HCT116 (cell line): ENCODE measurements at regions of chr17 and their contacts with region 1.

Region 1: GRCh38 chr17:40063187-40063771 is 514 bp downstream of the THRA start:
- DNase-seq: no peak
- ATAC-seq: peak; percentile 74
- H3K4me3 ChIP-seq: peak overlapping the region; percentile 81 to 92
- H3K27ac ChIP-seq: peak overlapping the region; percentile 88
- H3K4me1 ChIP-seq: peaks cover 32 to 43% of the 10 kb centered on the region in 2 experiments
- H3K27me3 ChIP-seq: no peaks in the 10 kb centered on the region
- CTCF ChIP-seq: no peak
- POLR2A ChIP-seq: no peak
- RAD21 ChIP-seq: no peak

Region 2: GRCh38 chr17:39563476-39563875 is 499.8 kb before region 1 on chr17:
- CTCF ChIA-PET with region 1: no interaction called
- POLR2A ChIA-PET with region 1: no interaction called
- RAD21 ChIA-PET with region 1: no interaction called
- intact Hi-C with region 1: no loop called
- DNase-seq: no peak
- ATAC-seq: no peak
- H3K4me3 ChIP-seq: no peak overlapping the region
- H3K27ac ChIP-seq: no peak overlapping the region
- H3K4me1 ChIP-seq: no peaks in the 10 kb centered on the region
- H3K27me3 ChIP-seq: no peaks in the 10 kb centered on the region
- CTCF ChIP-seq: no peak
- POLR2A ChIP-seq: no peak
- RAD21 ChIP-seq: no peak

Region 3: DNA sequence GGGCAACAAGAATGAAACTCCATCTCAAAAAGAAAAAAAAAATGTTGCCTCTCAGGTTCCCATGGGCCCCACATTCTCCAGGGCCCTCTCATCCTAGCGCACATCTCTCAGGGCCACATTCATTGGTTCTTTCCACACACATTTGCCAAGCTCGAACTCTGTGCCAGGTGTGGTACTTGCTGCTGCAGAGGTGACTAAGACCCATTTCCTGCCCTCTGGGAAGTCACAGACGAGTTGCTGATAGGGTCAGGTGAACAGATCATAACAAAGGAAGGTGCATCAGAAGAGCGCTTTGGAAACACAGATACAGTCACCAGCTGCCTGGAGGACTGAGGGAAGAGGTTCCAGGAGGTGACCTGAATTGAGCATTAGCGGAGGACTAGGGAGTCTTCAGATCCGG is 99.5 kb before region 1 on chr17:
- CTCF ChIA-PET with region 1: no interaction called
- POLR2A ChIA-PET with region 1: no interaction called
- RAD21 ChIA-PET with region 1: no interaction called
- intact Hi-C with region 1: no loop called
- DNase-seq: no peak
- ATAC-seq: no peak
- H3K4me3 ChIP-seq: no peak overlapping the region
- H3K27ac ChIP-seq: no peak overlapping the region
- H3K4me1 ChIP-seq: peaks cover 2 to 11% of the 10 kb centered on the region in 2 experiments; a peak in 2 of 4 replicates
- H3K27me3 ChIP-seq: peaks cover 5% of the 10 kb centered on the region; the same call in 1 of the 2 replicates
- CTCF ChIP-seq: no peak
- POLR2A ChIP-seq: no peak
- RAD21 ChIP-seq: no peak

Region 4: GRCh38 chr17:40075201-40075941 is 12.1 kb after region 1 on chr17:
- CTCF ChIA-PET with region 1: interaction called, 36 read pairs
- POLR2A ChIA-PET with region 1: interaction called, 5 read pairs
- RAD21 ChIA-PET with region 1: no interaction called
- intact Hi-C with region 1: no loop called
- DNase-seq: no peak
- ATAC-seq: peak; percentile 76
- H3K4me3 ChIP-seq: no peak overlapping the region
- H3K27ac ChIP-seq: peak overlapping the region; percentile 52; the same call in 1 of the 2 replicates
- H3K4me1 ChIP-seq: peaks cover 50 to 52% of the 10 kb centered on the region in 2 experiments
- H3K27me3 ChIP-seq: no peaks in the 10 kb centered on the region
- CTCF ChIP-seq: peak in 2 of 3 experiments; percentile 90 to 91; a peak in 5 of 6 replicates
- POLR2A ChIP-seq: no peak
- RAD21 ChIP-seq: no peak

Region 5: DNA sequence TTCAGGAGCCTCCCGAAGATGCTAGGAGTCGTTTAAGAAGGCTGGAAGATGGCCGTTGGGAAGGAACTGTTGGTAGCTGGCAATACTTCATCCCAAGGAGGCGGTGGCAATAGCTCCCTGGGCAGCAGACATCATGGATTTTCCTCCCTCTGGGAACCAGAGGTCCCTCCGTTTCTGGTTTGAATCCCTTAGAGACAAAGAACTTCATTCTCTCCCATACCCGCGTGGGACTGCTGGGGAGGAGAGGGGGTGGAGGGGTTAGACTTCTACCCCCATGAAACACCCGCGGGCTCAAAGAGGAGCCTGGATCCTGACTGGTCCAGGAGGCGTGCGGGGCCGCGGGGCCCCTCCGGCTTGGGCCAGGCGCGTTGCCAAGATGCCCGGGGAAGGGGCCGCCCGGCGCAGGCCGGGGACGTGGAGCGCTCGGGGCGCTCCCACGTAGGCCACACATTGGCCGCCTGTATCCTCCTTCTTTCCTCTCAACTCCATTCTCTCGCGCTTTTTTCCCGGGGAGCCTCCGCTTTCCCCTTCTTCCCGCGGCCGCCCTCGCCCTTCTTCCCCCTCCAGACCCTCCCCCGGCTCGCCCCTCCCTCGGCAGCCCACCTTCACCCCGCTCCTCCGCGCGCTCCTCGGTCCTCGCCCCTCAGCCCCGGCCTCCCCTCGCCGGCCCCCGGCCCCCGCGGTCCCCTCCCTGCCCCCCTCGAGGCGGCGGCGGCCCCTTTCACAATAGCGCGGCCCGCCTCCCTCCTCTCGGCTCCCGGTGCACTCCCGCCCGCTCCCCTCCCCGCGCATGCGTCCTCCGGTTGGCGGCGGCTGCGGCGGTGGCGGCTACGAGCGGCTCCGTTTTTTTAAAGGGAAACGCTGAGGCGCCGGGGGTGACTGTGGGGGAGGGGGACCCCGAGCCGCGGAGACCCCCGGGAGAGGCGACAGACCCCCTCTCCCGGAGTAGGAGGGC is 58.2 kb after region 1 on chr17 and contains the start of gene MSL1:
- CTCF ChIA-PET with region 1: no interaction called
- POLR2A ChIA-PET with region 1: no interaction called
- RAD21 ChIA-PET with region 1: no interaction called
- intact Hi-C with region 1: no loop called
- DNase-seq: no peak
- ATAC-seq: peak; percentile 73
- H3K4me3 ChIP-seq: peak within 1 kb of the TSS; percentile 70 to 86
- H3K27ac ChIP-seq: peak within 1 kb of the TSS; percentile 97
- H3K4me1 ChIP-seq: peaks cover 7 to 27% of the 10 kb centered on the region in 2 experiments; a peak in 3 of 4 replicates
- H3K27me3 ChIP-seq: no peaks in the 10 kb centered on the region
- CTCF ChIP-seq: no peak
- POLR2A ChIP-seq: no peak
- RAD21 ChIP-seq: no peak
- total RNA-seq, gene MSL1: 67.2 TPM

Region 6: DNA sequence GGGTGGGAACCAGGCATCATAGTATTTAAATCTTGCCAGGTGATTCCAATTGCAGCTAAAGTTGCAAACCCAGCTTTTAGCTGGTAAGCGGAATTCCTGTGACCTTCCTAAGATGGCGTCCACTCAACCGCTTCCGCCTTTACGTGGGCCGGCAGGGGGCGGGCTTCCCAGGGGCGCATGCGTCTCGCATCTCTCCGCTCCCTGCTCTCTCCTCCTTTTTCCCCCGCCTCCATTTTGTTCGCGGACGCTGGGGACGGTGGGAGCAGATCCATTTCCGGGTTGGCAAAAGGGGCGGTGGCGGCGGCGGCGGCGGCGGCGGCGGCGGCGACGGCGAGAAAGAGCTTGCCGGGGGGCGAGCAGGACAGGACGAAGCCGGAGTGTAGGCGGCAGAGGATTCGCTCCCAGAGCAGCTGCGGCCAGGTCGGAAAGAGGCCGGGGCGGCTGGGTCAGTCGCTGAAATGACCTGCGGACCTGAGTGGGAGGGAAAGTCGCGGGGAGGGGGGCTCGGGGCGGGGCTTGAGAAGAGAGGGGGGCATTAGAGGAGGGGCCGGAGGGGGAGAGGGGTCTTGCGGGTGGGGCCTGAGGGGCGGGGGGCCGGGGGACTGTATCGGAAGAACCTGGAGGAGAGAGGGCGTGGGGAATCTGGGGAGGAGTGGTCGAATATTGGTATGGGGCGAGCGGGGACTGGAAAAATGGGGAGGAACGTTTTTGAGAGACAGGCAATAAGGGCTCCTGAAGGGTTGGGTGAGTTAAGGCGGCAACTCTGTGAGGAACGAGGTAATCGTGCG is 156.0 kb after region 1 on chr17 and contains the start of gene WIPF2:
- CTCF ChIA-PET with region 1: no interaction called
- POLR2A ChIA-PET with region 1: no interaction called
- RAD21 ChIA-PET with region 1: no interaction called
- intact Hi-C with region 1: no loop called
- DNase-seq: peak; percentile 89
- ATAC-seq: peak; percentile 92
- H3K4me3 ChIP-seq: peak within 1 kb of the TSS; percentile 53 to 80
- H3K27ac ChIP-seq: peak within 1 kb of the TSS; percentile 89
- H3K4me1 ChIP-seq: peaks cover 6 to 19% of the 10 kb centered on the region in 2 experiments
- H3K27me3 ChIP-seq: no peaks in the 10 kb centered on the region
- CTCF ChIP-seq: peak in 2 of 3 experiments; percentile 54 to 79; a peak in 4 of 6 replicates
- POLR2A ChIP-seq: no peak
- RAD21 ChIP-seq: no peak
- total RNA-seq, gene WIPF2: 30.4 TPM